ENCODE measurements at regions of chr4 and their contacts with region 1.

Region 1: DNA sequence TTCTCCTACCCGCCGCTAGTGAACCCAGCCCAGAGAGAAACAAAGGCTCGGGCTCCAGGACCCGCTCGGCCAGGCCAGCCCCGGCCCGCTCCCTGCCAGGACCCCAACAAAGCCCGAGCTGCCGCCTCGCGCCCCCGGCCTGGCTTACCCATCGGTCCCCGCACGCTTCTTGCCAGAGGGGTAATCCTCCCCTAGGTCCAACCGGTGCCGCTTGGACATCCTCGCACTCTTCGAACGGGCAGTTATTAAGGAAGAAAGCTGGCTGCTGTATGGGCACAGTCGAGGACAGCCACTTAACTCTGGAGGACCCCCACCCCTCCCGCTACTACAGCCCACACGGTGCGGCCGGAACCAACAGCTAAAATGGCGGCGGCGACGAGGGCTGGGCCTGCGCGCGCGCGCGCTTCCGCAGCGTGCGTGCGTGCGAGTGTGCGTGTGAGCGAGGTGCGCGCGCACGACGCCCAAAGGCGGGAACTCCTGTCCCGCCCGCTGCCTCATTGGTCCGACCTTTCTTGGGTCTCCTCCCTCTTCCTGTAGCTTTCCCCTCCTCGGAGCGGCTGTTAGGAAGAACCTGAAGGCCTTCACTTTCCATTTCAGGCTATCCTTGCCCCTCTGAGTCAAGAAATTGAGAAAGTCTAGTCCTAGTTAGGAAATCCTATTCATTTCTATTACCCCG is at the start of gene DHX15:
- DNase-seq: peak; percentile 99
- ATAC-seq: peak; percentile 98
- total RNA-seq, gene DHX15: 53.9 TPM

Region 2: DNA sequence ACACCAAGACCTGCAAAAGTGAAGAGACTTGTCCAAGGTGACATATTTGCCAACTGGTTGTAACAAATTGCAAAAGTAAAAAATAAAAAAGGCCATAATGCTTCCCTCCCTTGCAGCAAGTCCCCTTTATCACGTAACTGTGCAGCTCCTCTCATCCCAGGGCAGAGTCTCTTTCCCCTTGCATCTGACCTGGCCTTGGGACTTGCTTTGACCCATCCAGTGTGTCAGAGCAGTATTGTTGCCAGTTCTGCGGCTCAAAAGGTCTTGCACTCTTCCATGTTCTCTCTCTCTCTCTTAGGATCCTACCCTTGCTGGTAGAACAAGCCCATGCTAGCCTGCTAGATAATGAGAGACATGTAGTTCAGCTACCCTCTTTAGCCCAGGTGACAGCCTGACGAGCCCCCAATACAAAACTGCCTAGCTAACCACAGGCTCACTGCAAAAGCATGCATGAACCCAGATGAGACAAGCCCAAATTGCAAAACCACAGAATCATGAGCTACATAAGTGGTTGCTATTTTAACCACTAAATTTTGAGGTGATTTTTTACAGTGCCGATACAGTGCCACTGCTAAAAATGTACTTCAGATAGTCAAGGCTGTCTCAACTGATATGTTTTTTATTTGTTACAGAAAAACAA is 405.0 kb before region 1 on chr4:
- intact Hi-C with region 1: no loop called
- DNase-seq: no peak
- ATAC-seq: no peak

Region 3: GRCh38 chr4:24743931-24744330 is 159.6 kb after region 1 on chr4:
- intact Hi-C with region 1: no loop called
- DNase-seq: no peak
- ATAC-seq: no peak

Region 4: DNA sequence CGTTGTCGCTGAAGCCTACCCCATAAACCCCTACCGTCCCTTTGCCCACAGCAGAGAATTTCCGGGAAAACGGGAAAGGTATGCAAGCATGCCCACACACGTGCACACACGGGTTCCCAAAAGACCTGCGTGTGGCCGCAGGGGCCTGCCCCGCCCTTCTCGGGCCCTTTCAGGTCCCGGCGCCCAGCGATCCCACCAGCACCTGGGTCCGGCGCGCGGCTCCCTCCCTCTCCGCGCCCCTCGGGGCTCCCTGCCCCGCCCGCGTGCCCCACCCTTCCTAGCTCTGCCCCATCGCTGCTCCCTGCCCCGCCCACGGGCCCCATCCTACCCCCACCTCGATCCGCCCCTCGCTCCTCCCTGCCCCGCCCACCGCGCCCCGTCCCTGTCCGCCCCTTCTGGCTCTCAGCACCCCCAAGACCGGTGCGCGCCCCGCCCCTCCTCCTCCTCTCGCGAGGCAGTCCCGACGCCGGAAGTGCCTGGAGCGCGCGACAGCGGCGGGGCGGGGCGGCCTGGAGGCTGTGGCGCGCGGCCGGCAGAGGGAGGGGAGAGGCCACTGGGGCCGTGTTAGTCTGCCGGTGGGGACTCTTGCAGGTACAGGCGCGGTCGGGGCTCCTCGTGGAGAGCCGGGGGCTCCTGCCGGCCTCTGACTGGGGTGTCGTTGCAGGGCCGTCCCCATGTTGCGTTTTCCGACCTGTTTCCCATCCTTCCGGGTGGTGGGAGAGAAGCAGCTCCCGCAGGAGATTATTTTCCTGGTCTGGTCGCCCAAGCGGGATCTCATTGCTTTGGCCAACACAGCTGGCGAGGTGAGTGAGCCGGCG is 792.6 kb after region 1 on chr4 and contains the start of gene ANAPC4:
- intact Hi-C with region 1: loop called (anchors 10 kb)
- DNase-seq: peak; percentile 97
- ATAC-seq: peak; percentile 97
- total RNA-seq, gene ANAPC4: 13.5 TPM